PC-3 (cell line): ENCODE measurements at regions of chr19 and their contacts with region 1.

Region 1: GRCh38 chr19:12736995-12737834 is at the start of gene GET3:
- DNase-seq: peak; percentile 100
- ATAC-seq: peak; percentile 88
- H3K4me3 ChIP-seq: peak within 1 kb of the TSS; percentile 89
- H3K27ac ChIP-seq: peak within 1 kb of the TSS; percentile 84
- H3K4me1 ChIP-seq: peaks cover 28% of the 10 kb centered on the region
- H3K27me3 ChIP-seq: no peaks in the 10 kb centered on the region
- CTCF ChIP-seq: no peak
- total RNA-seq, gene GET3: 251 and 264 TPM in 2 replicates

Region 2: GRCh38 chr19:12681074-12681951 is 55.9 kb before region 1 on chr19 and contains the start of gene DHPS:
- CTCF ChIA-PET with region 1: no interaction called
- POLR2A ChIA-PET with region 1: no interaction called
- intact Hi-C with region 1: loop called (anchors 1 kb)
- DNase-seq: peak; percentile 99
- ATAC-seq: peak; percentile 84
- H3K4me3 ChIP-seq: peak within 1 kb of the TSS; percentile 80
- H3K27ac ChIP-seq: peak within 1 kb of the TSS; percentile 96
- H3K4me1 ChIP-seq: no peaks in the 10 kb centered on the region
- H3K27me3 ChIP-seq: no peaks in the 10 kb centered on the region
- CTCF ChIP-seq: no peak
- total RNA-seq, gene DHPS: 140 and 150 TPM in 2 replicates

Region 3: GRCh38 chr19:12716861-12717260 is 20.4 kb before region 1 on chr19:
- CTCF ChIA-PET with region 1: interaction called, 6 read pairs
- POLR2A ChIA-PET with region 1: interaction called, 3 read pairs
- intact Hi-C with region 1: loop called (anchors 2 kb)
- DNase-seq: peak; percentile 79
- ATAC-seq: peak; percentile 44
- H3K4me3 ChIP-seq: no peak overlapping the region
- H3K27ac ChIP-seq: no peak overlapping the region
- H3K4me1 ChIP-seq: peaks cover 24% of the 10 kb centered on the region
- H3K27me3 ChIP-seq: no peaks in the 10 kb centered on the region
- CTCF ChIP-seq: peak; percentile 75

Region 4: DNA sequence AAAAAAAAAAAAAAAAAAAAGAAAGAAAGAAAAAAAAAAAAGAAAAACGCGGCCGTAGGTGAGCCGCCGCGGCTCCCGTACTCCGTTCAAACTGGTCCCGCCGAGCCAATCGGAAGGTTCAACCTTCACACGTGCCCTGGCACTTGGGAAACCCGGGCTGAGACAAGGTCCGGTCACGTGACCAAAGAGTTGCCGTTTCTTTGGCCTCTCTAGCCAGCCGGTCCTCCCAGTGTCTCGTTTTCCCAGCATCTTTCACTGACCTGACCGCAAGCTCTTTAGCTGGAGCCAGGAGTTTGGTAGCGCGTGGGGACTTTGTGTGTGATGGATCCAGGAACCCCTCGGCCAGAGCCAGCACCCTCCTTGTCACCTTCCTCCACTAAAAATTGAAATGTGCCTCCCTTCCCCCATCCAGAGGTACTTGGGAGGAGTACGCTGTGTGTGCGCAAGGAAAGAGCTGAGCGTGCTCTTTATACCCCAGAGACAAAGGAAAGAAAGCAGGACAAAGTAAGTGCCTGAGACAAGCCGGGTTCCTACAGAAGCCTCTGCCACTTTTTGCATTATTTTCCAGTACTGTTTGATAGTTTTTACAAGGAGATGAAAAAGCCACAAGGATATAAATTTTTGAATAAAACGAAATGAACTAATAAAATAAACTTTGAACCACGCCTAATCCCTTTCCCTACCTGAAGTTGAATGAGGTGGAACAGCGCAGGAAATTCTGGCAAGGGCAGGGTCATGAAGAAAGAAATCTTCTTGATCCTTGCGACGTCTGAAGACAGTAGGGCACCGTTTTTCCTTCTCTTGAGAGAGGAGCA is 14.4 kb before region 1 on chr19:
- CTCF ChIA-PET with region 1: interaction called, 3 read pairs
- POLR2A ChIA-PET with region 1: interaction called, 3 read pairs
- intact Hi-C with region 1: loop called (anchors 1 kb)
- DNase-seq: peak; percentile 99
- ATAC-seq: peak; percentile 62
- H3K4me3 ChIP-seq: peak overlapping the region; percentile 89
- H3K27ac ChIP-seq: peak overlapping the region; percentile 68
- H3K4me1 ChIP-seq: peaks cover 37% of the 10 kb centered on the region
- H3K27me3 ChIP-seq: no peaks in the 10 kb centered on the region
- CTCF ChIP-seq: no peak

Region 5: GRCh38 chr19:12769689-12770088 is 32.5 kb after region 1 on chr19:
- CTCF ChIA-PET with region 1: no interaction called
- POLR2A ChIA-PET with region 1: no interaction called
- intact Hi-C with region 1: no loop called
- DNase-seq: no peak
- ATAC-seq: no peak
- H3K4me3 ChIP-seq: no peak overlapping the region
- H3K27ac ChIP-seq: no peak overlapping the region
- H3K4me1 ChIP-seq: peaks cover 14% of the 10 kb centered on the region
- H3K27me3 ChIP-seq: no peaks in the 10 kb centered on the region
- CTCF ChIP-seq: no peak

Region 6: GRCh38 chr19:12847159-12848139 is 110.2 kb after region 1 on chr19:
- CTCF ChIA-PET with region 1: no interaction called
- POLR2A ChIA-PET with region 1: no interaction called
- intact Hi-C with region 1: no loop called
- DNase-seq: peak; percentile 94
- ATAC-seq: peak; percentile 97
- H3K4me3 ChIP-seq: peak overlapping the region; percentile 42; the same call in 1 of the 2 replicates
- H3K27ac ChIP-seq: no peak overlapping the region
- H3K4me1 ChIP-seq: peaks cover 14% of the 10 kb centered on the region
- H3K27me3 ChIP-seq: no peaks in the 10 kb centered on the region
- CTCF ChIP-seq: peak; percentile 99

Region 7: DNA sequence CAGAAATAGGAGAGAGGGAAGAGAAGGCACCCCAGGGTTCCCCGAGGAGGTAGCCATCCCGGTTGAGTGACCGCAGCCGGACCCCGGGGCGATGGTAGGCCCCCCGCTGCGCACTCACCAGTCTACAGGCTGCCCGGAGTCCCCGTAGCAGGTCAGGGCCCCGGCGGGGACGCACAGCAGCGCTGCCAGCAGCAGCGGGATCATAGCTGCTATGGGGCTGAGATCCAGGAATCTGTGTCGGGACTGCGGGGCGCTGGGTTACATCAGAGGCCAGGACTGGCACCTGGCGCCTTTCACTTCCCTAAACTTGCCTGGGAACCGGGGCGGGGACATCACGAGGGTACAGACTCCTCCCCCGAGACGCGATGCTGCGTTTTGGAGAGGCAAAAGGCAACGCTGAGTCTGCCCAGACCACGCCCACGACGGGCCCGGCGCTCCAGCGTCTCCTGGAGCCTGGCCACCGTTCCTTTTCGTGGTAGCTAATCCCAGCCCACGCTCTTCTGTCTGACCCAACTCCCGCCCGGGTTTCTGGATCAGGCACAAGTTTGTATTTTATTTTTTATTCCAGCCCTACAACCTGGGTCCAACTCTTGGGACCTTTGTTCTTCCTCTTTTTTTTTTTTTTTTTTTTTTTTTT is 144.1 kb after region 1 on chr19 and contains the start of gene DNASE2:
- CTCF ChIA-PET with region 1: no interaction called
- POLR2A ChIA-PET with region 1: interaction called, 10 read pairs
- intact Hi-C with region 1: no loop called
- DNase-seq: peak; percentile 98
- ATAC-seq: peak; percentile 97
- H3K4me3 ChIP-seq: peak within 1 kb of the TSS; percentile 93
- H3K27ac ChIP-seq: no peak within 1 kb of the TSS
- H3K4me1 ChIP-seq: peaks cover 7% of the 10 kb centered on the region; the same call in 1 of the 2 replicates
- H3K27me3 ChIP-seq: peaks cover 9% of the 10 kb centered on the region; the same call in 1 of the 2 replicates
- CTCF ChIP-seq: no peak
- total RNA-seq, gene DNASE2: 47.1 and 48.0 TPM in 2 replicates